Dendritic cell treated with granulocyte-macrophage colony-stimulating factor and Interleukin-4, amounts not matched to agents 40 ng/mL and 50 ng/mL, for 4 days (primary cell): ENCODE measurements at regions of chr16 and their contacts with region 1.

Region 1: GRCh38 chr16:30526823-30527635 is 663 bp upstream of the ZNF768 start:
- H3K4me3 Mint-ChIP-seq: peak overlapping the region; percentile 76
- H3K27ac Mint-ChIP-seq: peak overlapping the region; percentile 99
- H3K4me1 Mint-ChIP-seq: peaks cover 67% of the 10 kb centered on the region
- H3K27me3 Mint-ChIP-seq: no peaks in the 10 kb centered on the region

Region 2: DNA sequence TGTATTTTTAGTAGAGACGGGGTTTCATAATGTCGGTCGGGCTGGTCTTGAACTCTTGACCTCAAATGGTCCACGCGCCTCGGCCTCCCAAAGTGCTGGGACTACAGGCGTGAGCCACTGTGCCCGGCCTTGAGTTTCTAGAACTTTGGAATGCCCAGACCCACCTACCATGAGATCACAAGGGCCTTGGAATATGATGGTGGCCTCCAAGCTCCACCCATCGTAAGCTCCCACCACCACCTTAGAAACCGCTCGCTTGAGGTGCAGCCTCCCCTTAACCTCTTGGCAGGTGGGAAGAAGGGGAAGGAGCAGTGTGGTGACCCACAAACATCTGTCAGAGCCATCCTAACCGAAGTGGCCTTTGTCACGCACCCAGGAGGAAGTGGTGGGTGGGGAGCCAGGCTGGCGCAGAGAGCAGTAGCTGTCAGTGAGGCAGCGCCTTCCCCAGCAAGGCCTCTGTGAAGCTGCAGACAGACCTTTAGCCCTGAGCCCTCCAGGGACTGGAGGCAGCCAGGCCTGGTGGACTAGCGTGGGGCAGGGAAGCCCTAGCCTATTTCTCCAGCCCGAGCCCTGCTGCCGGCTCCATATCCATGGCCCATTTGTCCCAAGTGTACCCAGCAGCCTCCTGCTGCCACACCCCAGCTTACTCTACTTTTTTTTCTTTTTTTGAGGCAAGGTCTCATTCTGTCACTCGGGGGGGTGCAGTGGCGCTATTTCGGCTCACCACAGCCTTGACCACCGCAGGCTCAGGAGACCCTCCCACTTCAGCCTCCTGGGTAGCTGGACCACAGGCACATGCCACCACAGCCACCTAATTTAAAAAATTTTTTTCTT is 68.3 kb before region 1 on chr16:
- intact Hi-C with region 1: no loop called
- H3K4me3 Mint-ChIP-seq: peak overlapping the region; percentile 30
- H3K27ac Mint-ChIP-seq: peak overlapping the region; percentile 92
- H3K4me1 Mint-ChIP-seq: peaks cover 52% of the 10 kb centered on the region
- H3K27me3 Mint-ChIP-seq: no peaks in the 10 kb centered on the region

Region 3: GRCh38 chr16:30491744-30492308 is 35.2 kb before region 1 on chr16:
- intact Hi-C with region 1: no loop called
- H3K4me3 Mint-ChIP-seq: no peak overlapping the region
- H3K27ac Mint-ChIP-seq: peak overlapping the region; percentile 58
- H3K4me1 Mint-ChIP-seq: peaks cover 40% of the 10 kb centered on the region
- H3K27me3 Mint-ChIP-seq: no peaks in the 10 kb centered on the region

Region 4: GRCh38 chr16:30585400-30586189 is 58.6 kb after region 1 on chr16 and contains the start of gene ZNF785:
- intact Hi-C with region 1: loop called (anchors 1 kb)
- H3K4me3 Mint-ChIP-seq: peak within 1 kb of the TSS; percentile 92
- H3K27ac Mint-ChIP-seq: peak within 1 kb of the TSS; percentile 85
- H3K4me1 Mint-ChIP-seq: peaks cover 32% of the 10 kb centered on the region
- H3K27me3 Mint-ChIP-seq: no peaks in the 10 kb centered on the region

Region 5: GRCh38 chr16:30761427-30761927 is 234.4 kb after region 1 on chr16:
- intact Hi-C with region 1: no loop called
- H3K4me3 Mint-ChIP-seq: peak overlapping the region; percentile 90
- H3K27ac Mint-ChIP-seq: peak overlapping the region; percentile 95
- H3K4me1 Mint-ChIP-seq: peaks cover 61% of the 10 kb centered on the region
- H3K27me3 Mint-ChIP-seq: no peaks in the 10 kb centered on the region